Cardiac septum (tissue), 1 donor: ENCODE measurements at regions of chr17 and their contacts with region 1.

Region 1: GRCh38 chr17:74176546-74177001 is 26.9 kb upstream of the RPL38 start:
- DNase-seq: no peak

Region 2: DNA sequence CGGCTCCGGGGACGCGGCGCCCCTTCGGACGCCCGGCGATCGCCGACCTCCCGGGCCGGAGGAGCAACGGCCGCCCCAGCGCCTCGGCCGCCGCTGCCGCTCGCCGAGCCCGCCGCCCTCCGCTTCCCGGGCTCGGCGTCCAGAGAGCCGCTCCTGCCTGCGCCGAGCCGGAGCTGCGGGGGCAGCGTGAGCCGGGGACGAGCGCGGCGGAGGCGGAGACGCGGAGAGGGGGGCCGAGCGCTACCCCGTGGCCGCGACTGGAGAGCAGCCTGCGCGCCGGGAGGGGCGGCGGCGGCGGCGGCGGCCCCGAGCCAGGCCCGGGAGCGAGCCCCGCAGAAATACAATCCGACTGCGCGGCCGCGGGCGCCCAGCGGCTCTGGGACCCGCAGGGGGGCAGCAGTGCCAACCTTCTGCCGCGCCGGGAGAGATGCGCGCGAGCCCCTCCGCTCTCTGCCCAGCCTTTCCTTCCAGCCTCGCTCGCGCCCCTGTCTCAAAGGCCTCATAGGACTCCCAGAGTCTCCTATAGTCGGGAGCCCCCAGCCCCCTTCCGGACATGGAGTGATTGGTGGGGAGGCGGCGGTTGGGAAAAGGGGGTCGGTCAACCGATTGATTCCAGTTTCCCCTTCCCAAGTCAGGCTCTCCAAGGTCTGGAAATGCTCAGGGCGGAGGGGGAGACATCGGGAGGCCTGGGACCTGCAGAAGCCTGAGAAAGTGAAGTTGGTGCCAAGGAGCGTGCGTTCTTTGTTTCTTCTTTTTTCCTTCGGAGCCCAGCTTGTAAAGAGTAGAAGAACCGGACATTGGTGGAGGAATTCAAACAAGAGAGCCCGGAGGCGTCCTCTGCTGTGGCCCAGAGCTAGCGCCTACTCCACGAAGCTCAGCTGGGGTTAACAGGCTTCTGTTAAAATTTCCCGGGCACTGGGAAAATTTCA is 531.3 kb before region 1 on chr17:
- intact Hi-C with region 1: loop called (anchors 5 kb)
- DNase-seq: no peak

Region 3: GRCh38 chr17:74147056-74147807 is 29.3 kb before region 1 on chr17:
- intact Hi-C with region 1: no loop called
- DNase-seq: no peak

Region 4: DNA sequence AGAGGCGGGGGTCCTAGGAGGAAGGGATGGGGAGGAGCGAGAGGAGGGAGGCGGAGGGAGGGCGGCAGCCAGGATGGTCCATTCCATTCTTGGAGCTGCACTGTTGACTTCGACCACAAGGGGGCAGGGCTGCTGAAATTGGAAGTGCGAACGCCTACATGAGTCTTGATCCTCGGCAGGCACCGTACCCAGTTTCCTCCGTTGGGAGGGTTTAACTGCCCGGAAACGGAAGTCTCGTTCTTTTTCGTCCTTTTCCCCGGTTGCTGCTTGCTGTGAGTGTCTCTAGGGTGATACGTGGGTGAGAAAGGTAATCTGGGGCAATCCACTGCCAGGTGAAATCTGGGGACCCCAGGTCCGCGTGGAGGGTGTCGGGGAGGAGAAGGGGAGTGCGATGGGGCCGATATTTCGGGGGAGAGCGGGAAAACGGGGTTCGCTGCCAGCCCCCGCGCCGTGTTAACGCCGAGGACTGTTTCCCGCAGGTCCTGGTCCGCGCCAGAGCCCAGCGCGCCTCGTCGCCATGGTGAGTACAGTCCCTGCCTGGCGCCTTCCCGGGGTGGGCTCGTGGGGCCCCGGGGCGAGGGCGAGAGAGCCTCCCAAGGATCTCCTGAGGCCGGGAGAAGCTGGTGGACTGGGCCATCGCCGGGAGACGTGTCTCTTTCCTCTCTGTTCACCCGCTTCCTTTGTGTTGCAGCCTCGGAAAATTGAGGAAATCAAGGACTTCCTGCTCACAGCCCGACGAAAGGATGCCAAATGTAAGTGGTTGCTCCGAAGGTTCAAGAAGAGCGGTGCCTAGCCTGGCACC is 27.1 kb after region 1 on chr17 and contains the start of gene RPL38:
- intact Hi-C with region 1: no loop called
- DNase-seq: peak; percentile 97
- total RNA-seq, gene RPL38: 575 TPM